Spleen (tissue), 13 donors: ENCODE measurements at regions of chr2 and their contacts with region 1.

Region 1: DNA sequence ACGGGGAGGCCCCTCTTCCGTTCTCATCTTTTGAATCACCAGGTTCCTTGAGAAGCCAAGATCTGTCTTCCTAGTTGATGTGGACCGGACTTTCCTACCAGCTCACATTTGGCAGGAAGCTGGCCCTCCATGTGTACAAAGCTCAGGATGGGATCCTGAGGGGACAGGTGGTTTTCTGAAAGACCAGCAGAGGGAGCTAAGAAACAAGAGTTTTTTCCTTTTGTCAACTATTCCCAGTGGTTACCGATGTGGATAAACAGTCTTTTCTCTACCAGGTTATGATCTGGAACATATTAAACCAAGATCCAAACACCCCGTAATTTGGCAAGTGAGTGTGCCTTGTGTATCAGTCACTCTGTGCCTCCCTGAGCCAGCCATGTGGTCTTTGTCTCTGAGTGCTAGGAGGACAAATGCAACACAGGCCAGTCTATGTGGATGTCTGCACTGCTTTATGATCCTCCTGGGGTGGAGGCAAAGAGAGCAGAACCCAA is 25.1 kb upstream of the ARHGAP25 start:
- DNase-seq: no peak
- H3K4me3 ChIP-seq: no peak overlapping the region
- H3K27ac ChIP-seq: no peak overlapping the region
- H3K4me1 ChIP-seq: peaks cover under 1 to 34% (median 7%) of the 10 kb centered on the region in 6 donors
- H3K27me3 ChIP-seq: no peaks in the 10 kb centered on the region
- CTCF ChIP-seq: peak; percentile 58 to 85 (median 79)
- POLR2A ChIP-seq: no peak

Region 2: DNA sequence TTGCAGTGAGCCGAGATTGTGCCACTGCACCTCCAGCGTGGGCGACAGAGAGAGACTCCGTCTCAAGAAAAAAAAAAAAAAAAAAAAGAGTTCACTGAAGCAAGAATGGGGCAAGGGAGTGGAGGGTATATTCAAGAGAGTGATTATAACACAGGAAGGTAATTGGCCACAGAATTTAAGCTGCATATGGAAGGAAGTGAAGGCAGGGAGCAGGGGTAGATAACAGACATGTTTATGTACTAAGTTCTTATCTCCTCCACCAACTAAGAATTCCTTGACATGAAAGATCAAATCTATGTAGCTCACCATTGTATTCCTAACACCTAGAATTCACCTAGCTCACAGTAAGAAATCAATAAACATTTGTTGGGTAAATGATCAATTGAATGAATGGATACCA is 205.9 kb after region 1 on chr2:
- intact Hi-C with region 1: no loop called
- DNase-seq: no peak
- H3K4me3 ChIP-seq: no peak overlapping the region
- H3K27ac ChIP-seq: no peak overlapping the region
- H3K4me1 ChIP-seq: peaks cover 0 to 17% (median 9%) of the 10 kb centered on the region in 6 donors
- H3K27me3 ChIP-seq: no peaks in the 10 kb centered on the region
- CTCF ChIP-seq: no peak
- POLR2A ChIP-seq: no peak

Region 3: DNA sequence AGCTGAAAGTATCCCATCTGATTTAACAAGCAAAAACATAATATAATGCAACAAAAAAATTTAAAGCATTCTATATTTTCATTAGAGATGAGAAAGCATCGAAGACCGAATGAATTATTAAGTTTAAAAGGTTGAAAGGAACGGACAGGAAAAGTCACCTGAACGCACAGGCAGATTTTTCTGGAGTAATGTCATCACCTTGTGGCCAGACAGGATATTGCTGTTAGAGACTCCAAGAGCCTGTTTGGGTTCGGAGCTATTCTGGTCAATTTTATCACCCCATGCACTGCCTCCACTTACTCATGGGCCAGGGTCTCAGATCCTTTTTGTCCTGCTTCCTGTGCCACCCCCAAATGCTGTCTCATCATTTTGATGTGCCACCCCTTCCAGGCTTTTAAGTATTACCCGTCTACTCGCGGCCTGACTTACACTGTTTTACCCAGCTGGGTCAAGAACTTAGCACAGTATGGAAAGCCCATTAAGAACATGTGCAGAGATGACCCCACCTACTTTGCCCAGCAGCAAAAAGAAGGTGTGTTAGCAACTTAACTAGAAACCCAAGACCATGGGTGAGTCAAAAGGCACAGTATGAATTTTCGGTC is 215.9 kb after region 1 on chr2:
- intact Hi-C with region 1: loop called (anchors 5 kb)
- DNase-seq: no peak
- H3K4me3 ChIP-seq: no peak overlapping the region
- H3K27ac ChIP-seq: no peak overlapping the region
- H3K4me1 ChIP-seq: peaks cover 0 to 5% (median 2%) of the 10 kb centered on the region in 6 donors
- H3K27me3 ChIP-seq: no peaks in the 10 kb centered on the region
- CTCF ChIP-seq: peak; percentile 65 to 91 (median 84)
- POLR2A ChIP-seq: no peak